Calu3 (cell line): ENCODE measurements at regions of chr17 and their contacts with region 1.

Region 1: GRCh38 chr17:82767041-82767754 is 15.3 kb downstream of the TBCD start:
- DNase-seq: peak; percentile 74
- H3K4me3 Mint-ChIP-seq: no peak overlapping the region
- H3K27ac Mint-ChIP-seq: no peak overlapping the region
- H3K4me1 Mint-ChIP-seq: no peaks in the 10 kb centered on the region
- H3K27me3 Mint-ChIP-seq: no peaks in the 10 kb centered on the region
- CTCF ChIP-seq: peak; percentile 65

Region 2: DNA sequence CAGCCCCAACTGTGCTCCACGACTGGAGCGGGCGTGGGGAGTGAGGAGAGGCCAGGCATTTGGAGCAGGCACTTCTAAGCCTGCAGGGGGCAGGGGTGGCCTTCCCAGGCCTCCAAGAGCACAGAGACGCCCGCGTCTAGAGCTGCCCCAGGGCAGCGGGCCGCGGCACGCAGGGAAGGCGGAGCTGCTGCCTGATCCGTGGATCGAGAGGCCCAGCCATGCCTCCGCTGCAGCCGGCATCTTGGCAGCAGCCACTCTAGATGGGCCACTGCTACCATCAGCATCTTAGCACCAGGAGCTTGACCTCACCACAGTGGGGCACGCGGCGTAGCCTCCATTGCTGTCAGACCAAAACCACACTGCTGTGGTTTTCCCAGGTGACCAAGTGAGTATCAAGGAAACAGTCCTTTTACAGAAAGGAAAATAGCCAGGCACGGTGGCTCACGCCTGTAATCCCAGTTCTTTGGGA is 98.5 kb before region 1 on chr17:
- CTCF ChIA-PET with region 1: interaction called, 7 read pairs
- intact Hi-C with region 1: loop called (anchors 5 kb)
- DNase-seq: peak; percentile 78
- H3K4me3 Mint-ChIP-seq: peak overlapping the region; percentile 53
- H3K27ac Mint-ChIP-seq: peak overlapping the region; percentile 54
- H3K4me1 Mint-ChIP-seq: peaks cover 17% of the 10 kb centered on the region
- H3K27me3 Mint-ChIP-seq: no peaks in the 10 kb centered on the region
- CTCF ChIP-seq: peak; percentile 50